ENCODE measurements at regions of chr18 and their contacts with region 1.

Region 1: DNA sequence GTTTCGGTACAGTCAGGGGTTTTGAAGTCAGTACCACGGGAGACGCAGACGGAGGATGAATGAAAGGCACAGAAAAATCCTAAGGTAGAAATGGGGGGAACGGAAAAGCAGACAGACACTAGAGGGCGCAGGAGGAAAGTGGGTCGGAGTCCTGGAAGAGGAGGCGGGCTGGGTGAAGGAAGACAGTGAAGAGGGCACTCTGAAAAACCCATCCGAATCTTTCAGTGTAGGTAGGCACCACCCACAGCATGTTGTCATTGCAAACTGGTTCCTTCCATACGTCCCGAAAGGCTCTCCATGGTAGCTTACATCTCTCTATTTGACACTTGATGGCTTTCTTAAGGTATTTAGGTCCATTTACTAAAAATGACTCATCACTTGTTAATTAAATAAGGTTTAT is 18.5 kb upstream of the ZNF236 start:
- DNase-seq: peak in 2 of 3 donors; percentile 58 to 72
- ATAC-seq: peak; percentile 83 to 88 (median 84)
- H3K4me3 ChIP-seq: no peak overlapping the region
- H3K27ac ChIP-seq: no peak overlapping the region
- H3K4me1 ChIP-seq: peaks cover 0 to 9% (median 0%) of the 10 kb centered on the region in 4 donors
- H3K27me3 ChIP-seq: no peaks in the 10 kb centered on the region
- CTCF ChIP-seq: peak; percentile 46 to 77 (median 74)
- POLR2A ChIP-seq: no peak

Region 2: DNA sequence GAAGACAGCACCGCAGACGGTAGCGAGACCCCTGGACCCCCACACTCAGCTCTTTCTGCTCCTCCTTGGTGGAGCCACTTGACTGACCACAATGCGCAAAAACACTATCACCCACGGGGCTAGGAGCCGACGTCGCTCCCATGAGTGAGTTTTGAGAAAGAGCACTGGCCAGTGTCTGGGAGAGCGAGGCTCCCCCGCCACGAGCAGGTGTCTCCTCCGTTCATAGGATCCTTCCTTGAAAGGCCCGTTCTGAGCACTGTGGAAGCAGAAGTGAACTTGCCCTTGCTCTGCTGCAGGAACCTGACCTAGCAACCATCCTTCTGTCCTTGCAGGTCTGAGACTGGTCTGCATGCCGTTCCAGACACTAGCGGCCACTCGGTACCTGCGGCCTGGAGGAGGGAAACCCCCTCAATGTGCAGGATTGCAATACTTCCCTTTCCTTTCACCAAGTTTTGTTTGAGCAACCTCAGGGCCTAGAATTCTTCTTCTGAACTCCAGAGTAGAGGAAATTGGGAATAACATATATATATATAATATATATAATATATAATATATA is 295.9 kb before region 1 on chr18:
- intact Hi-C with region 1: no loop called
- DNase-seq: no peak
- ATAC-seq: no peak
- H3K4me3 ChIP-seq: no peak overlapping the region
- H3K27ac ChIP-seq: no peak overlapping the region
- H3K4me1 ChIP-seq: no peaks in the 10 kb centered on the region
- H3K27me3 ChIP-seq: no peaks in the 10 kb centered on the region
- CTCF ChIP-seq: no peak
- POLR2A ChIP-seq: no peak

Region 3: GRCh38 chr18:76859474-76860339 is 55.9 kb after region 1 on chr18:
- intact Hi-C with region 1: loop called in 1 of 2 experiments (anchors 10 kb)
- DNase-seq: no peak
- ATAC-seq: no peak
- H3K4me3 ChIP-seq: no peak overlapping the region
- H3K27ac ChIP-seq: no peak overlapping the region
- H3K4me1 ChIP-seq: peaks cover 0 to 8% (median 0%) of the 10 kb centered on the region in 4 donors
- H3K27me3 ChIP-seq: no peaks in the 10 kb centered on the region
- CTCF ChIP-seq: no peak
- POLR2A ChIP-seq: no peak

Region 4: DNA sequence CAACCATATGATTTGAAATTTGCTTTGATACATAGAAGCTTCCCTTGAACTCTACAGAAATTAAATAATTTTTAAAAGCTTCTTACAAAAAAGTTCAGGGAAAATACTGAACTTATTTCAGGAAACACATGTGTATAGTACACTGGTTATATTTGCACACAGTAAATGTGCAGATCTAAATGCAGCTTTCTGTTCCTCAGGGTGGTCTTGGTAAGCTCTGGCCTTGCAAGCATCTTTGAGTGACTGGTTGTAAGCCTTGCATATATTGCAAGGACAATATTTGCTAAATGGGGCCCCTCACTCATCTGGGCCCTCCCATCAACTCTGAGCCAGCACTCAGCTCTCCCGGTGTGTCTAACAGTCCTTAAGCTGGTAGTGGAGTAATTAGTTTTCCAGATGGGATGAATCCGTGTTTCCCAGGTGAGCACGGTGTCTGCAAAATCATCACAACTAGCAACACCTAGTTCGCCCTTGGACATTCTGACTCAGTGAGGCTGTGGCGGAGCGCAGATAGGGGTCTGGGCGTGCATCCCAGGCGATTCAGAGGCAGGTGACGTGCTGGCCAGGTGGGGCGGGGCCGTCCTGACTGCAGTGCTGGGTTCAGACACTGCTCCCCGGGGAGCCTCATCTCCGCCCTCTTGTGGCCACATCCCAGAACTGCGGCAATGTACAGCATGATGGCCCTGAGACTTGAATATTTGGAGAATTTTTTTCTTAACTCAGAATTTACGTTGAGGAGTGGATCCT is 179.2 kb after region 1 on chr18:
- intact Hi-C with region 1: loop called in 1 of 2 experiments (anchors 10 kb)
- DNase-seq: peak; percentile 91
- ATAC-seq: peak; percentile 91 to 93 (median 92)
- H3K4me3 ChIP-seq: no peak overlapping the region
- H3K27ac ChIP-seq: no peak overlapping the region
- H3K4me1 ChIP-seq: peaks cover 0 to 12% (median 2%) of the 10 kb centered on the region in 4 donors
- H3K27me3 ChIP-seq: no peaks in the 10 kb centered on the region
- CTCF ChIP-seq: peak; percentile 87 to 97 (median 93)
- POLR2A ChIP-seq: no peak

Region 5: GRCh38 chr18:77157312-77157711 is 353.5 kb after region 1 on chr18:
- intact Hi-C with region 1: no loop called
- DNase-seq: no peak
- ATAC-seq: no peak
- H3K4me3 ChIP-seq: no peak overlapping the region
- H3K27ac ChIP-seq: no peak overlapping the region
- H3K4me1 ChIP-seq: no peaks in the 10 kb centered on the region
- H3K27me3 ChIP-seq: no peaks in the 10 kb centered on the region
- CTCF ChIP-seq: no peak
- POLR2A ChIP-seq: no peak

Measured in right lobe of liver (tissue), 6 donors.